Mucosa of descending colon (tissue), 3 donors: ENCODE measurements at regions of chr17 and their contacts with region 1.

Region 1: DNA sequence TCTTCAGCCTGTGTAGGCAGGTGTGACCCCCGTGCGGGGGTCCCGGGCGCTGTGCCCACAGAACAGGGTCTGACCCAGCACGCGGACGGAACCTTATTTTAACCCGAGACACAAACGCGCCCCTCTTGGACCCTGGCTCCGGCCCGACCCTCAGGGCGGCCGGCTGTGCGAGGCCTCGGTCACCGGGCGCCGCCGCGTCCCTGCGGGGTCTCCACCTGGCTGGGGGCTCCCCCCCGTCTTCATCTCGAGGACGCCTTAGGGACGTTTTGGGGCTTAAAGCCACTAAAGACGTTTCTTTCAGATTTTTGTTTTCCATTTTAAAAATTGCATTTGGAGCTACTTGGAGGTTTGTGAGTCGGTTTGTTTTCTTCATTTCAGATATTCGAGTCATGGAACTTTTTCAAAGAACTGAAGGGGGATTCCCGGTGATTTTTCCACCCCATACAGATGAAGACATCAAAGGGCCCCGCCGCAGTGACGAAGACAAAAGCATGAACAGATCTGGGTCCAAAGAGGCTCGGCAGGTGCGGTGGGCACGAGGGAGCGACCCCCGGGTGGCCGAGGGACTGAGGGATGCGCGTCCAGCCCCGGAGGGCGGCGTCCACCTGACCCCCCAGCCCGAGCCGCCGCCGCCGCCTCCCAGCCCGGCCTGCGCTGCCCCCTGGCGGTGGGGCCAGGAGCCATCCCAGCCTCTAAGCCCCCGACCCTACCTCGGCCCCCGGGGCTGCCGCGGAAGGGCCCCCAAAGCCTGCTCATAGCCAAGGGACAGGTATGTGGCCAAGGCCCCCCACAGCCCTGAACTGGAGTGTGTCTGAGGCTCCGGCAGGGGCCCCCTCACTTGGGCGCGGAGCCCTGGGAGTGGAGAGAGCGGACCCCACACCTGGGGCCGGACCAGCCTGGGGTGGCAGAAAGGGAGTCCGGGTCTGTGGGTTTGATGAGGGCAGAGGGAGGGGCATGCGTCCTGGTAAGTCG is 3.8 kb upstream of the CD7 start:
- DNase-seq: peak in 1 of 3 donors; percentile 52
- ATAC-seq: peak; percentile 28
- H3K4me3 ChIP-seq: no peak overlapping the region
- H3K4me1 ChIP-seq: no peaks in the 10 kb centered on the region
- CTCF ChIP-seq: peak; percentile 79

Region 2: DNA sequence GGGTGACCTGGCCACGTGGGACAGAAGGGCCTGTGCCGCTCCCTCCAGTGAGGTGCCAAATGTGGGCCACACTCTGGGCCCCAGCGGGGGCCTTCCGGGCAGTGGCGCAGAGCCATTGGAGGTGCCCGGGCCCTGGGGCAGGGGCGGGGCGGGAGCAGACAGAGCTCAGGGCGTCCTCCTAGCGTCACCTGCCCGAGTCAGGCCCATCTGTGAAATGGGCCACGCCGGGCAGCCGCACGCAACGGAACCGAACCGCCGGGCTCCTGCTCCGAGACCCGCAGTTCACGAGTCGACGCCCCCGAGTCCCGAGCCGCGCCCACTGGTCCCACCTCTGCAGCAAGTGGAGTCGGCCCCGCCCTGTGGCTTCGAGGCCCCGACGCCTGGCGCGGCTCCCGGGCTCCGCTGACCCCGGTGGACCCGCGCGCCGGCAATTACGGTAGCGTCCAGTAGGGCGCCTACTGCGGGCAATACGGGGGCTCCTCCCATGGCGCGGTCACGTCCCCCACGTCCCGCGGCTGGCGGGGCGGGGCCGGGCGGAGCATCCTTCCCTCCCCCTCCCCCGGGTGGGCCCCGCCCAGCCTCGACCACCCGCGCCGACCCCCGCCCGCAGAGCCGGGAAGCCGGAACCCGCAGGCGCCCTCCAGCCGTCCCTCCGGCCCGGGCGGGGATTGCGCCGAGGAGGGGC is 90.5 kb before region 1 on chr17:
- intact Hi-C with region 1: loop called in 1 of 2 experiments (anchors 10 kb)
- DNase-seq: peak; percentile 93 to 94 (median 94)
- ATAC-seq: peak; percentile 70
- H3K4me3 ChIP-seq: peak overlapping the region; percentile 14
- H3K4me1 ChIP-seq: peaks cover 49% of the 10 kb centered on the region
- CTCF ChIP-seq: peak; percentile 48